ENCODE measurements at regions of chr10 and their contacts with region 1.

Region 1: GRCh38 chr10:21458126-21458871 is 67.2 kb downstream of the SKIDA1 start:
- DNase-seq: no peak
- H3K4me3 ChIP-seq: peak overlapping the region in 1 of 2 donors; percentile 5
- H3K27ac ChIP-seq: no peak overlapping the region
- H3K4me1 ChIP-seq: no peaks in the 10 kb centered on the region
- H3K27me3 ChIP-seq: no peaks in the 10 kb centered on the region
- CTCF ChIP-seq: no peak
- POLR2A ChIP-seq: no peak

Region 2: GRCh38 chr10:21393931-21394330 is 64.4 kb before region 1 on chr10:
- intact Hi-C with region 1: loop called (anchors 2 kb)
- DNase-seq: no peak
- H3K4me3 ChIP-seq: no peak overlapping the region
- H3K27ac ChIP-seq: no peak overlapping the region
- H3K4me1 ChIP-seq: peaks cover 8% of the 10 kb centered on the region
- H3K27me3 ChIP-seq: no peaks in the 10 kb centered on the region
- CTCF ChIP-seq: no peak
- POLR2A ChIP-seq: no peak

Measured in vagina (tissue), 2 donors.